ENCODE measurements at regions of chr11 and their contacts with region 1.

Region 1: GRCh38 chr11:77619576-77620198 is 17.9 kb downstream of the CLNS1A start:
- DNase-seq: no peak
- H3K4me3 ChIP-seq: no peak overlapping the region
- H3K27ac ChIP-seq: no peak overlapping the region
- H3K4me1 ChIP-seq: no peaks in the 10 kb centered on the region
- H3K27me3 ChIP-seq: no peaks in the 10 kb centered on the region
- CTCF ChIP-seq: peak; percentile 57 to 74 (median 69)
- POLR2A ChIP-seq: no peak

Region 2: DNA sequence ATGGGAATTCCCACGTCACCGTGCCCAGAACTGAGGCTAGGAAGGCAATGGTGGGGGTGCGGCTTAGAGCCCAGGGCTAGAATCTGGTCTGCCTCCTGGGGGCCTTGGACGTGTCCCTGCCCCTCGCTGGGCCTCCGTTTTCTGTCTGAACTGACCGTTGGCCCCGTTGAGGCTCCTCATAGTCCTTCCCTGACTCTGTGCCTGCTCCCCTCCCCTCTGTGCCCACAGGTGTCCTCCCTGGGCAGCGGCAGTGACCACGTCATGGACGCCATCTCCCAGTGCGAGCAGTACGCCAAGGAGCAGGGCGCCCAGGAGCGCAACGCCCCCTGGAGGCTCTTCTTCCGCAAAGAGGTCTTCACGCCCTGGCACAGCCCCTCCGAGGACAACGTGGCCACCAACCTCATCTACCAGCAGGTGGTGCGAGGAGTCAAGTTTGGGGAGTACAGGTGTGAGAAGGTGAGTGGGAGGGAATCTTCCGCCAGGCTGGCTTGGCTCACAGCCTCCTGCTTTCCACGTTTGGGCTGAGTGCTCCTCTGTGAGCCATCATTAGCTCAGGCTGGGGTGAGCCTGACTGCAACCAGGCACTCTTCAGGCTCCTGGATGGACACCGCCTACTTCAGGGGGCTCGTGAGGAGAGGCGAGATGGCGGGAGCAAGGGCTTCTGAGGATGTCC is 427.7 kb before region 1 on chr11:
- intact Hi-C with region 1: loop called (anchors 10 kb)
- DNase-seq: peak; percentile 49
- H3K4me3 ChIP-seq: no peak overlapping the region
- H3K27ac ChIP-seq: no peak overlapping the region
- H3K4me1 ChIP-seq: peaks cover 6% of the 10 kb centered on the region
- H3K27me3 ChIP-seq: no peaks in the 10 kb centered on the region
- CTCF ChIP-seq: peak in 2 of 3 experiments; percentile 6 to 25
- POLR2A ChIP-seq: no peak

Measured in testis (tissue), 5 donors.